ENCODE measurements at regions of chr14 and their contacts with region 1.

Region 1: GRCh38 chr14:93655078-93655750 is 133.1 kb downstream of the PRIMA1 start:
- DNase-seq: peak in 1 of 2 experiments; percentile 45
- H3K4me3 ChIP-seq: no peak overlapping the region
- H3K27ac ChIP-seq: no peak overlapping the region
- H3K4me1 ChIP-seq: peaks cover 0 to 8% (median 0%) of the 10 kb centered on the region in 4 experiments; a peak in 2 of 7 replicates
- H3K27me3 ChIP-seq: no peaks in the 10 kb centered on the region
- CTCF ChIP-seq: peak in 2 of 3 experiments; percentile 49 to 56; a peak in 3 of 4 replicates
- EP300 ChIP-seq: no peak
- POLR2A ChIP-seq: no peak
- RAD21 ChIP-seq: peak; percentile 77 to 80

Region 2: GRCh38 chr14:93464271-93464670 is 190.9 kb before region 1 on chr14:
- CTCF ChIA-PET with region 1: no interaction called
- POLR2A ChIA-PET with region 1: no interaction called
- DNase-seq: no peak
- H3K4me3 ChIP-seq: no peak overlapping the region
- H3K27ac ChIP-seq: no peak overlapping the region
- H3K4me1 ChIP-seq: no peaks in the 10 kb centered on the region
- H3K27me3 ChIP-seq: no peaks in the 10 kb centered on the region
- CTCF ChIP-seq: no peak
- EP300 ChIP-seq: no peak
- POLR2A ChIP-seq: no peak
- RAD21 ChIP-seq: no peak

Region 3: DNA sequence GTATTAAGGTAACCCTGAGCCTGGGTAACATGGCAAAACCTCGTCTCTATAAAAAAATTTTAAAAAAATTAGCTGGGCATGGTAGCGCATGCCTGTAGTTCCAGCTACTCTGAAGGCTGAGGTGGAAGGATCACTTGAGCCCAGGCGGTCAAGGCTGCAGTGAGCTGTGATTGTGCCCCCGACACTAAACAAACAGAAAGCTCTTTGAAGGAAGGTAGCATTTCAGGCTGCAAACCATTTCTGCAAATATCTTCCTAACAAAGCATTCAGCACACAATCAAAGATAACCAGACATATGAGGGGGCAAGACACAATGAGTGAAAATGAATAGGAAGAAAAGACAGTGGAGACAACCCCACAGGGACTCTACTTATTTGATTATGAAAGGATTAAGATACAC is 14.4 kb after region 1 on chr14:
- CTCF ChIA-PET with region 1: interaction called, 27 read pairs
- POLR2A ChIA-PET with region 1: no interaction called
- DNase-seq: no peak
- H3K4me3 ChIP-seq: no peak overlapping the region
- H3K27ac ChIP-seq: no peak overlapping the region
- H3K4me1 ChIP-seq: no peaks in the 10 kb centered on the region
- H3K27me3 ChIP-seq: no peaks in the 10 kb centered on the region
- CTCF ChIP-seq: no peak
- EP300 ChIP-seq: no peak
- POLR2A ChIP-seq: no peak
- RAD21 ChIP-seq: no peak

Region 4: GRCh38 chr14:93712838-93713724 is 57.9 kb after region 1 on chr14:
- CTCF ChIA-PET with region 1: interaction called, 10 read pairs
- POLR2A ChIA-PET with region 1: no interaction called
- DNase-seq: peak in 1 of 2 experiments; percentile 41
- H3K4me3 ChIP-seq: no peak overlapping the region
- H3K27ac ChIP-seq: no peak overlapping the region
- H3K4me1 ChIP-seq: peaks cover 4 to 13% (median 7%) of the 10 kb centered on the region in 4 experiments
- H3K27me3 ChIP-seq: 0 out of 7 replicates have a peak, but pooled peaks cover 0 to 4% (median 0%) of the 10 kb centered on the region in 4 experiments
- CTCF ChIP-seq: no peak
- EP300 ChIP-seq: no peak
- POLR2A ChIP-seq: no peak
- RAD21 ChIP-seq: no peak

Region 5: GRCh38 chr14:93788543-93789227 is 133.5 kb after region 1 on chr14:
- CTCF ChIA-PET with region 1: interaction called, 20 read pairs
- POLR2A ChIA-PET with region 1: no interaction called
- DNase-seq: peak in 1 of 2 experiments; percentile 74
- H3K4me3 ChIP-seq: peak overlapping the region; percentile 65 to 77 (median 70)
- H3K27ac ChIP-seq: no peak overlapping the region
- H3K4me1 ChIP-seq: peaks cover 0 to 19% (median 7%) of the 10 kb centered on the region in 4 experiments; a peak in 4 of 7 replicates
- H3K27me3 ChIP-seq: peaks cover 4 to 30% (median 23%) of the 10 kb centered on the region in 4 experiments
- CTCF ChIP-seq: peak in 1 of 3 experiments; percentile 18; a peak in 1 of 4 replicates
- EP300 ChIP-seq: no peak
- POLR2A ChIP-seq: peak in 1 of 2 experiments; percentile 66; a peak in 2 of 3 replicates
- RAD21 ChIP-seq: peak; percentile 22 to 38; a peak in 2 of 4 replicates

Region 6: DNA sequence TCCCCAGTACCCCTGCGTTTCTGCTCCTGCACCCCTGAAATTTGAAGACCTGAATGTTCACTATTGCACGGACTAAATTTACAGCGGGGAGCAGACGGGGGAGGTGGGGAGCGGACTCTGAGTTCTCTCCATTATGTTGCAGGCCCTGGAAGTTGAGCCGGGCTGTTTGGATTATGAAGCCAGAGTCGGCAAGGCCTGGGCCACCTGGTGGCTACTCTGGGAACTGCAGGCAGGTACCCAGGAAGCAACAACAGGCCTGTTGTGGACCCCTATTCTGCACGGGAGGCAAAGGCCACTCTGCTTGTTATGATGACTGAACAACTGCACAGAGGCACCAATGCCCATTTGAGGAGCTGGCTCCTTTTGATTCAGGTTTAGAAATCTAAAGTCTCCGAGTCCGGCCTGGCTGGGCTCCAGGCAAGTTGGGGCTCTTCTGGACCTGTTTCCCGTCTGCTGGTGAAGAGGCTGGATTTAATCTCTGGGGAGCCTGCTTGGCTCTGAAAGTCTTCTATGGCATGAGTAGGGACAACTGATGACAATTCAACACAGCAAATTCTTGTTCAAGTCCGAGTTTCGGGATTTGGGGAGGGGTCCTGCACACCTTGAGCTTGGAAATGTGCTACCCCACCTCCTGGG is 237.8 kb after region 1 on chr14:
- CTCF ChIA-PET with region 1: interaction called, 149 read pairs
- POLR2A ChIA-PET with region 1: no interaction called
- DNase-seq: peak; percentile 46 to 98
- H3K4me3 ChIP-seq: peak overlapping the region in 1 of 4 experiments; percentile 10; a peak in 1 of 8 replicates
- H3K27ac ChIP-seq: no peak overlapping the region
- H3K4me1 ChIP-seq: peaks cover 4 to 20% (median 10%) of the 10 kb centered on the region in 4 experiments
- H3K27me3 ChIP-seq: no peaks in the 10 kb centered on the region; a peak in 1 of 7 replicates
- CTCF ChIP-seq: peak; percentile 88 to 96 (median 90)
- EP300 ChIP-seq: no peak
- POLR2A ChIP-seq: no peak
- RAD21 ChIP-seq: peak; percentile 71 to 82